Activated CD4-positive, alpha-beta memory T cell treated with anti-CD3 and anti-CD28 coated beads, Interleukin-2, amount 10 ng/mL, durations not matched to agents 7 days and 5 days (primary cell): ENCODE measurements at regions of chr15 and their contacts with region 1.

Region 1: GRCh38 chr15:74460871-74461846 is at the start of gene UBL7:
- DNase-seq: peak; percentile 99
- H3K4me3 Mint-ChIP-seq: peak within 1 kb of the TSS; percentile 93
- H3K27ac Mint-ChIP-seq: peak within 1 kb of the TSS; percentile 80
- H3K4me1 Mint-ChIP-seq: peaks cover 50% of the 10 kb centered on the region
- H3K27me3 Mint-ChIP-seq: no peaks in the 10 kb centered on the region
- total RNA-seq, gene UBL7: 54.7 to 61.3 TPM

Region 2: GRCh38 chr15:74407055-74407691 is 54.0 kb before region 1 on chr15:
- CTCF ChIA-PET with region 1: no interaction called
- POLR2A ChIA-PET with region 1: interaction called, 20 read pairs
- DNase-seq: no peak
- H3K4me3 Mint-ChIP-seq: no peak overlapping the region
- H3K27ac Mint-ChIP-seq: no peak overlapping the region
- H3K4me1 Mint-ChIP-seq: peaks cover 24% of the 10 kb centered on the region
- H3K27me3 Mint-ChIP-seq: no peaks in the 10 kb centered on the region

Region 3: GRCh38 chr15:74545880-74546656 is 84.9 kb after region 1 on chr15:
- CTCF ChIA-PET with region 1: no interaction called
- POLR2A ChIA-PET with region 1: interaction called, 42 read pairs
- DNase-seq: peak; percentile 89
- H3K4me3 Mint-ChIP-seq: peak overlapping the region; percentile 60
- H3K27ac Mint-ChIP-seq: peak overlapping the region; percentile 79
- H3K4me1 Mint-ChIP-seq: peaks cover 82% of the 10 kb centered on the region
- H3K27me3 Mint-ChIP-seq: no peaks in the 10 kb centered on the region

Region 4: DNA sequence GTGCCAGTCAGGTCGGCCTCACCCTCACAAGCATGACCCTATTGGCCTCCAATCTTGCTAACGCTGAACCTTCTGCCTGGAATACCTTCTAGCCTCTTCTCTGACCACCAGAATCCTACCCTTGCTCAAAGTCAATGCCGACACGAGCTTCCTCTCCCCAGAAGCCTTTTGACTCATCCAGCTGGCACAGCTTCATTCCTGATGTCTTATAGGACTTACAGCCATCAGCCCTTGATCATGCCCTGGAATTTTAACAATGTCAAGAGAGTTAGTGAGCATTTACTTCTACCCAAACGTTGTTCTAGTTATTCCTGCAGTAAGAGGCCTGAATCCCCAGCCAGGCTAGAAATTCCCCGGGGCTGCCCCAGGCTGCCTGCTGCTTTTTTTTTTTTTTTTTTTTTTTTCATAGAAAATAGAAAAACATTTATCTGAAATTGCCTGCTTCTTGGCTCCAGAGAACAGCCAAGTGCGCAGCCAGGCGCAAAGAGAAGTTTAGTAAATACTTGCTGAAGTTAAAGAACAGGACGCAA is 291.4 kb after region 1 on chr15:
- CTCF ChIA-PET with region 1: no interaction called
- POLR2A ChIA-PET with region 1: no interaction called
- DNase-seq: no peak
- H3K4me3 Mint-ChIP-seq: no peak overlapping the region
- H3K27ac Mint-ChIP-seq: no peak overlapping the region
- H3K4me1 Mint-ChIP-seq: no peaks in the 10 kb centered on the region
- H3K27me3 Mint-ChIP-seq: peaks cover 3% of the 10 kb centered on the region